Spleen (tissue), 13 donors: ENCODE measurements at regions of chr17 and their contacts with region 1.

Region 1: DNA sequence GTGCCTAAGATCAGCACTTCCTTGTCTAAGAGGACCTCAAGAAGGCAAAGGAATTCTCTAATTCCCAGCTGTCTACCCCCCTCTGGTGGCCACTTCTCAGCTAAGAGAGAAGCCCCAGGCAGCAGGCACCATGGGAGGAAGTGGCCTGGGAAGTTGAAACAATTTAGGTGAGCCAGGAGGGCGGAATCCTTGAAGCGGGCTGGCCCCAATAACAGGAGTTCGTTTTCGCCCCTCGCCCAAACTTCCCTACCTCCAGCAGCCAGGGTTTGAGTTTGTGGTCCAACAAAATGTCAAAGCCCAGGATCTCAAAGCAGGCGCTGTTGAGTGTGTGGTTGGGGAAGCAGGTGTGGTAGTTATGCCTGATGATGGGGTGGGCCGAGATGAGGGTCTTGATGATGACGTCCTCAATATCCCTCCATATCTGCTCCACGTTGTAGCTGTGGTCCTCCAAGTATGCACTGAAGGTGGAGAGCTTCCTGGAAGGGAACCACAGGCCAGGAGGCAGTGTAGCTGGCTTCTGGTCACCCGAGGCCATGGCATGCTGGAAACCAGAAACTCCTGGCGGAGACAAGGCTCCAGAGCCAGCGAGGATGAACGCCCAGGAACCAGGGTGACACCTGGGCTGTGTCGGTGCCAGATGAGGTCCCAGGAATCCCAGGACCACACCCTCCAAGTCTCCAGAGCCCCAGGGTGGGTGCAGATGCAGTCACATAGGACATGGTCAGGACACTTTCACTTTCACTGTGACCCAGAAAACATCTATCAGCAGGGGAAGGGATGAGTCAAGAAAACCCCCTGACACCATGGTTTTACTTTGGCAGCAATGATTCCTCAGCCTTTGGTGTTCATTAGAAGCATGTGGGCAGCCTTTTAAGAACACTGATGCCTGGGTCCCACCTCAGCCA is 25.6 kb downstream of the TTLL6 start:
- DNase-seq: no peak
- H3K4me3 ChIP-seq: no peak overlapping the region
- H3K27ac ChIP-seq: no peak overlapping the region
- H3K4me1 ChIP-seq: peaks cover 0 to 14% (median 2%) of the 10 kb centered on the region in 6 donors
- H3K27me3 ChIP-seq: peaks cover 0 to 96% (median 5%) of the 10 kb centered on the region in 7 donors
- CTCF ChIP-seq: peak; percentile 16 to 82 (median 69)
- POLR2A ChIP-seq: no peak

Region 2: GRCh38 chr17:48671697-48672171 is 119.6 kb before region 1 on chr17:
- intact Hi-C with region 1: loop called (anchors 5 kb)
- DNase-seq: peak; percentile 84
- H3K4me3 ChIP-seq: peak overlapping the region in 2 of 8 donors; percentile 34 to 38
- H3K27ac ChIP-seq: no peak overlapping the region
- H3K4me1 ChIP-seq: peaks cover 3 to 11% (median 8%) of the 10 kb centered on the region in 6 donors
- H3K27me3 ChIP-seq: peaks cover 0 to 91% (median 6%) of the 10 kb centered on the region in 7 donors
- CTCF ChIP-seq: peak; percentile 44 to 87 (median 78)
- POLR2A ChIP-seq: no peak

Region 3: DNA sequence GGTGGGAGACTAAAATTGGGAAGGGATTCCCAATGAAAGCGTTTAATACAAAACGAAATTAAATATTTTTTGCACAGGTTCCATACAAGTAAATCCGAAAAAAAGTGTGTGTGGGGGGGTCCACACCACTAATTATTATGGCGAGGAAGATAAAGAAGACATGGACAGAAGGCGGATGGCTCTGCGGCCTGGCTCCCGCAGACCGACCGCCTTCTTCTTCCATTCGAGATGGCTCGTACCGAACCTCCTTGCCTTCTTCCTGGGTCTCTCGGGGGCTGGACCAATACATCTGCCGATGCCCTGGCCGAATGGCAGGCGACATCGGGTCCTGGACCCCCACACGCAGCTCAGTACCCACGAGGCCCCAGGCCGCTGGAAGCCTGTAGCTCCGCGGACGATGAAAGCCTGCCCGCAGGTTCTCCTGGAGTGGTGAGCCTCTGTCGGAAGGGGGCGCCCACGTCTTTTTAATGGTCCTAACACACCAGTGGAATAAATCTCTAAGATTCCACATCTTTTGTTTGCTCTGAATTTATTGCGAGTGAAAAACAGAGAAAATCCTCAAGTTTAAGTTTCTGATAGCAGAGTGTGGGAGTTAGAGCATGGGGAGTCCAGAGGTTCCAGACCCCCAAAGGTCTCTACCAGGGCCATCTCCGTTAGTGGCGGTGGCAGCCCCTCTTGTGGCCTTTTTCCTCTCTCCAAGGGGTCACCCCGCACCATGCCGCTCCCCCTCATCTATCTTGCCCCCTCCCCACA is 67.0 kb before region 1 on chr17:
- intact Hi-C with region 1: loop called (anchors 2 kb)
- DNase-seq: peak; percentile 89
- H3K4me3 ChIP-seq: peak overlapping the region in 1 of 8 donors; percentile 48
- H3K27ac ChIP-seq: no peak overlapping the region
- H3K4me1 ChIP-seq: peaks cover 14 to 67% (median 51%) of the 10 kb centered on the region in 6 donors
- H3K27me3 ChIP-seq: peaks cover 29 to 100% (median 100%) of the 10 kb centered on the region in 7 donors
- CTCF ChIP-seq: peak in 10 of 11 experiments; percentile 50 to 82 (median 68)
- POLR2A ChIP-seq: no peak